OCI-LY7 (cell line): ENCODE measurements at regions of chr9 and their contacts with region 1.

Region 1: GRCh38 chr9:94623253-94623652 is 16.1 kb downstream of the FBP1 start:
- DNase-seq: peak; percentile 83
- H3K4me3 ChIP-seq: no peak overlapping the region
- H3K27ac ChIP-seq: no peak overlapping the region
- H3K4me1 ChIP-seq: peaks cover 6% of the 10 kb centered on the region
- CTCF ChIP-seq: peak; percentile 80

Region 2: DNA sequence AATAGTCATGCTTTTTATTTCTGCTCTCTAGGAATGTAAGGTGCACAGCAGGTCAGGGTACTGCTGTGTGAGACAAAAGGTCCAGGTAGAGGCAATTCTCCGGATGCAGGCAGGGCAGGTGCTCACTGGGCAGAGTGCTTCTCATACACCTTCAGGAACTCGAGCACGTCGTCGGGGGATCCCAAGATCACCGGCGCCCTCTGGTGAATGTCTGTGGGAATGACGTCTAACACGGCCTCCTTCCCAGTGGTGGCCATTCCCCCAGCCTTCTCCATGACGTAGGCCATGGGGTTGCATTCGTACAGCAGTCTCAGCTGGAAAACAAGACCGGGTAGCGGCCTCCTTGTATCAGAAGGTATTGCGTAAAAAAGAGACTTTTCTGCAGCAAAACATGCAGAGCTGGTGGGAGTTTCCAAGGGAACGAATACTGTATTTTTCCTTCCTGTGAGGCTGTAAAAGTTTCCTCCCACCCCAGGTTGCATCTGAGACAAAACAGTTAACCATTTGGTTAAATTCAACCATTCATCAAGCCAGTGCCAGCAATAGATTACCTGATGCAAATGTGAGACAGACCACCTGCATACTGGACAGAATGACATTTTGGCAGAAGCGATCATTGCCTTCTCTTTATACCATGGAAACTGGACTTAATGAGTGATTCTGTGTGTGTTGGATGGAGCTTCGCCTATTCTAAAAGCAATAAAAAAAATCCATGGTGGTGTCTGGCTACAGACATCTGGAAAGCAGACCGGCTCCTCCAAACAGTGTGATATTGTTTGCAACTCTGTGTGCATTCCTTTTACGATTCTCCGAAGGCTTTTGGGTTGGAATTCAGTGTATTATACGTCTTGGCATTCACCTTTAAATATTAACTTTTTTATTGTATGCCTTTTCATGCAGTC is 19.7 kb before region 1 on chr9:
- CTCF ChIA-PET with region 1: interaction called, 3 read pairs
- POLR2A ChIA-PET with region 1: no interaction called
- intact Hi-C with region 1: loop called (anchors 1 kb)
- DNase-seq: peak; percentile 84
- H3K4me3 ChIP-seq: peak overlapping the region; percentile 75
- H3K27ac ChIP-seq: peak overlapping the region; percentile 93
- H3K4me1 ChIP-seq: peaks cover 82% of the 10 kb centered on the region
- CTCF ChIP-seq: peak; percentile 83

Region 3: DNA sequence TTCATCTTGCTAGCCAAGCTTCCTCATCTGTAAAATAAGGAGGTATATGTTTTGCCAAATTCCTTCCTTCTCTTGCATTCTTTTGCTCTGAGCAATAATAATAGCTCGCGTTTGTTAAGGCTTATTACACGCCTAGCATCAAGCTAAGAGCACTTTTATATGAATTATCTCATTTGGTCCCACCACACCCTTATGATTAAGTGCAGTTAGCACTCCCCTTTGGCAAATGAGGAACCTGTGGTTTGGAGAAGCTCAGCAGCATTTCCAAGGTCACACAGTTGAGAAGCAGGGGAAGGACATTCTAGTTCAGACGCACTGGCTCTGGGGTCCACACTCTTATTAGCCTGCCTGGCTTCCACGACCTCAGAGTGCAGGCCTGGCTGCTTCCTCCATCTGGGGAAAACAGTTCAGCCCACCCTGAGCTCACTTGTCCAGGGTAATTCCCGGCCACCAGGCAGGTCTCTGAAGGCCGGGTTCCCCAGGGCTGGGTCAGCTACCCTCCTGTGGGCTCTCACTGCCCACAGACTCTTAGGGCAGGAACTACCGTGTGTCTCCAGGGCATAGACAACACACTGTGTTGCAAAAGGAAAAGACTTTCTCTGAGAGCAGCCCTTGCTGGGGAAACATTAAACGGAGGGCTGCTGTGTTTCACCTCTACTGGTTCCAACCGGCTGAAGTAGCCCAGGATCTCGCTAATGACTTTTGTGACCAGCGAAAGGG is 26.0 kb after region 1 on chr9:
- CTCF ChIA-PET with region 1: no interaction called
- POLR2A ChIA-PET with region 1: no interaction called
- intact Hi-C with region 1: no loop called
- DNase-seq: no peak
- H3K4me3 ChIP-seq: no peak overlapping the region
- H3K27ac ChIP-seq: no peak overlapping the region
- H3K4me1 ChIP-seq: no peaks in the 10 kb centered on the region
- CTCF ChIP-seq: no peak